ENCODE measurements at regions of chr10 and their contacts with region 1.

Region 1: GRCh38 chr10:9668411-9668810 is 1349.3 kb upstream of the CELF2 start:
- DNase-seq: no peak
- H3K4me3 Mint-ChIP-seq: no peak overlapping the region
- H3K27ac Mint-ChIP-seq: no peak overlapping the region
- H3K4me1 Mint-ChIP-seq: no peaks in the 10 kb centered on the region
- H3K27me3 Mint-ChIP-seq: peaks cover 2% of the 10 kb centered on the region

Region 2: DNA sequence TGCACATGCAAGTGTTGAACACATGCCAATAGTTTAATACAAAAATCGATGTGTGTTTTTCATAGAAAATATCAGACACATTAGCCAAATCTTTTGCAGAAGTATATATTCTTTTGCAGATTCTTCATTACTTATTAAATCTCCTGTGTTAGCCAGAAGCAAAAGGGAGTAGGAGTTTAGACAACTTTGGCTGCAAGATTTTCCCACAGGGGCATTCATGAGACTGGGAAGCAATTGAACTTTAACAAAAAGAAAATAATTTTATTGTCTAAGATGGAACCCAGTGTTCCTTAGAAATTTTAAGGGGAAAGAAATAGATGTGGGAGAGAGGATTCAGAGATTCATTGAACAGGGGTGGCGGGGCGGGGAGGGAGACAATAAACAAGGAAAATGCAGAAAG is 277.9 kb before region 1 on chr10:
- intact Hi-C with region 1: no loop called
- DNase-seq: no peak
- H3K4me3 Mint-ChIP-seq: no peak overlapping the region
- H3K27ac Mint-ChIP-seq: no peak overlapping the region
- H3K4me1 Mint-ChIP-seq: peaks cover 4% of the 10 kb centered on the region
- H3K27me3 Mint-ChIP-seq: no peaks in the 10 kb centered on the region

Region 3: DNA sequence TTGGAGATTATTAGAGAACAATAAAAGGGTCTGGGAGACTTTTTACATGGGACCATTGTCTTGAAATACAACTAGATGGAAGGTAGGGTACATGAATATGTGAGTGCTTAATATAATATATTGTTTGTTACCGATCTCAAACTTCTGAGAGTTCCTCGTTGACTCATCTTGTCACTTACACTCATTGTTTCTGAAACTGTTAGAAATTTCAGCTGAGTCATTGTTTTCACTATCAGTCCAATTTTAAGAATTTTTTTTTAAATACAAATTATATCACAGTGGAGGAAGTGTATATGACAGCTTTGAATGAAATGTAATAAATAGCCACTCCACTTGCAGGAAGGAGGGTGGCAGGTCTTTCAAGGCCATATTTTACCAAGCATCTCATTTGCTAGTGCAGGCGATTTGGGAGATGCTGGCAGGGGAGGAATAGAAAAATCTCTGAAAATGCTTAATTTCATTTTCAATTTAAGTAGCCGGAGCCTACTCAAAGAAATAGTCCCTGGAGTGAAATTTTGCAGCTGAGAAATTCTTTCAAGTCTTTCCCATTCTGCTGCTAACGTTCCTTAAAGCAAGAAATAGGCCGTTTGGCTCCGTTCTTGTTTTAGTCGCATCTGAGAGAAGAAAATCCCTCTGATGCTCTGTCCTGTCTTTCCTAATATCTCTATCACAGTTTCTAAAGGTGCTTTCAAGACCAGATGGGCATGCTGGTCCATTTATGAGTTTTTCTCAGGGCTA is 54.9 kb before region 1 on chr10:
- intact Hi-C with region 1: no loop called
- DNase-seq: no peak
- H3K4me3 Mint-ChIP-seq: no peak overlapping the region
- H3K27ac Mint-ChIP-seq: no peak overlapping the region
- H3K4me1 Mint-ChIP-seq: no peaks in the 10 kb centered on the region
- H3K27me3 Mint-ChIP-seq: no peaks in the 10 kb centered on the region

Region 4: GRCh38 chr10:9636216-9636615 is 32.2 kb before region 1 on chr10:
- intact Hi-C with region 1: loop called (anchors 1 kb)
- DNase-seq: no peak
- H3K4me3 Mint-ChIP-seq: no peak overlapping the region
- H3K27ac Mint-ChIP-seq: no peak overlapping the region
- H3K4me1 Mint-ChIP-seq: no peaks in the 10 kb centered on the region
- H3K27me3 Mint-ChIP-seq: peaks cover 2% of the 10 kb centered on the region